CD8-positive, alpha-beta T cell (primary cell): ENCODE measurements at regions of chr9 and their contacts with region 1.

Region 1: GRCh38 chr9:85610074-85610860 is 131.5 kb downstream of the AGTPBP1 start:
- DNase-seq: peak in 5 of 9 experiments; percentile 21 to 86 (median 44)
- ATAC-seq: peak; percentile 94
- H3K4me3 ChIP-seq: no peak overlapping the region
- H3K4me3 Mint-ChIP-seq: peak overlapping the region; percentile 23
- H3K27ac ChIP-seq: peak overlapping the region in 1 of 2 experiments; percentile 36
- H3K27ac Mint-ChIP-seq: peak overlapping the region; percentile 66
- H3K4me1 ChIP-seq: no peaks in the 10 kb centered on the region
- H3K4me1 Mint-ChIP-seq: peaks cover 9% of the 10 kb centered on the region
- H3K27me3 ChIP-seq: no peaks in the 10 kb centered on the region
- H3K27me3 Mint-ChIP-seq: no peaks in the 10 kb centered on the region
- CTCF ChIP-seq: peak; percentile 74

Region 2: DNA sequence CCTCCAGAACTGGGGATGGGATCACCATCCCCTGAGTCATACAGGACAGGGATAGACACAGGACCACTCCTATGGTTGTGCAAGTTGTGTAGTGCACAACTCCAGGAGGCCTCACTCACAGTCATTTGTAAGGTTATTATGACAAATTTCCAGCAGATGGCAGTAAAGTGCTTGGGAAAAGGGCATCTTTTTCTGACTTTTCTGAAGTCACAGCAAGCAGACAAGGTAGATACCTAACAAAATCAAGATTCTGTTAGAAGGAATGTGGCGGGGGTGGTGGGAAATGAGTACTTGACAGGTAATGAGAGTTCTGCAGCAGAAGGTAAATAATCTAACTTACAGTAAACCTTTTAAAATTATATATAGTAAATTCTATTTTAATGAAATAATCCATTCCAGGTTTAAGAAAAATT is 1672.3 kb before region 1 on chr9:
- CTCF ChIA-PET with region 1: no interaction called
- POLR2A ChIA-PET with region 1: no interaction called
- intact Hi-C with region 1: loop called in 1 of 2 experiments (anchors 5 kb)
- DNase-seq: peak in 6 of 9 experiments; percentile 4 to 78 (median 40)
- ATAC-seq: peak; percentile 77
- H3K4me3 ChIP-seq: no peak overlapping the region
- H3K4me3 Mint-ChIP-seq: no peak overlapping the region
- H3K27ac ChIP-seq: no peak overlapping the region
- H3K27ac Mint-ChIP-seq: no peak overlapping the region
- H3K4me1 ChIP-seq: no peaks in the 10 kb centered on the region
- H3K4me1 Mint-ChIP-seq: peaks cover 2% of the 10 kb centered on the region
- H3K27me3 ChIP-seq: no peaks in the 10 kb centered on the region
- H3K27me3 Mint-ChIP-seq: no peaks in the 10 kb centered on the region
- CTCF ChIP-seq: peak; percentile 80

Region 3: DNA sequence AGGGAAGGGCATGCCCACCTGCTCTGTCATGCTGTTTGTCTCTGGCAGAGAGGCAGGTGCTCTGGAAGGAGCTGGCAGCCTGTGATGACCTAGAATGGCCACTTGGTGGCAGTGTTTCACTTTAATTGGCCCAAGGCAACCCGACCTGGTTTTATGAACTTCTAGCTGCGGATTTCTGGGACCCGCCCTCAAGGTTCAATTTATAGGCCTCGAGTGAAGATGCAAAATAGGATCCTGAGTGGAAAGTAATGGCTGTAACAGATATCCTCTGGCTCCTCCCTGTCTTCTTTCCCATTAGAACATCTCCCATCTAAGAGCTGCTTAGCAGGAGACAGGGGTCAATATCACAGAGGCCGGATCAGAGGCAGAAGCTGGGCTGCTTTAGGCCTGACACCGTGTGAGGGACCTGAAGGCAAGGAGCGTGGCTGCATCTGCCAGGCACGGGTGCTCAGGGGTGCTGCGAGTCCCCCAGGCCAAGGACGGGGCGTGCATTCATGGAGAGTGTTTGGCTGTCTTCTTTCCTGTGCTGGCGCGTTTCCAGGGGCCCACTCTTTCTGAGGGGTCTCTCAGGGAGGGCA is 1213.0 kb before region 1 on chr9:
- CTCF ChIA-PET with region 1: interaction called, 24 read pairs
- POLR2A ChIA-PET with region 1: no interaction called
- intact Hi-C with region 1: loop called in 1 of 2 experiments (anchors 1 kb)
- DNase-seq: peak; percentile 28 to 72 (median 61)
- ATAC-seq: peak; percentile 56
- H3K4me3 ChIP-seq: no peak overlapping the region
- H3K4me3 Mint-ChIP-seq: no peak overlapping the region
- H3K27ac ChIP-seq: no peak overlapping the region
- H3K27ac Mint-ChIP-seq: no peak overlapping the region
- H3K4me1 ChIP-seq: no peaks in the 10 kb centered on the region
- H3K4me1 Mint-ChIP-seq: no peaks in the 10 kb centered on the region
- H3K27me3 ChIP-seq: no peaks in the 10 kb centered on the region
- H3K27me3 Mint-ChIP-seq: peaks cover 2% of the 10 kb centered on the region
- CTCF ChIP-seq: peak; percentile 79

Region 4: DNA sequence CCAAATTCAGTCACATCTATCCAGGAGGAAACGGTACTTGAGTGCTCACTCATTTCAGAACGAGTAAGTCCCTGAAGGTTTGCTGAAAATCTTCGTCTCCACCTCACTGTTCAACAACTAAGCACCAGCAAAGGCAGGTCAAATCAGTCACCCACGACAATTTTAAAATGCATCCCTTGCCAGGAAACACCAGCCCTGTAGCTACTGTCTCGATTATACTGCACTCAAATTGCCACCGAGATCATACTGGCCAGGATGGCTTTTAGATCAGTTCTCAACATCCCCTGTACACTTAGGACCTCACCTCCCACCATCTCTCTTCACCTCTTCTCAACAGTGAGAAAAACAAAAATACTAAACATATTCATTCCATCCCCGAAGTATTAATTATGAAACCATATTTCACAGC is 167.1 kb before region 1 on chr9:
- CTCF ChIA-PET with region 1: no interaction called
- POLR2A ChIA-PET with region 1: no interaction called
- intact Hi-C with region 1: no loop called
- DNase-seq: no peak
- ATAC-seq: no peak
- H3K4me3 ChIP-seq: no peak overlapping the region
- H3K4me3 Mint-ChIP-seq: no peak overlapping the region
- H3K27ac ChIP-seq: no peak overlapping the region
- H3K27ac Mint-ChIP-seq: no peak overlapping the region
- H3K4me1 ChIP-seq: no peaks in the 10 kb centered on the region
- H3K4me1 Mint-ChIP-seq: no peaks in the 10 kb centered on the region
- H3K27me3 ChIP-seq: no peaks in the 10 kb centered on the region
- H3K27me3 Mint-ChIP-seq: no peaks in the 10 kb centered on the region
- CTCF ChIP-seq: no peak

Region 5: GRCh38 chr9:85594316-85594715 is 16.0 kb before region 1 on chr9:
- CTCF ChIA-PET with region 1: interaction called, 5 read pairs
- POLR2A ChIA-PET with region 1: no interaction called
- intact Hi-C with region 1: loop called in 1 of 2 experiments (anchors 2 kb)
- DNase-seq: no peak
- ATAC-seq: no peak
- H3K4me3 ChIP-seq: no peak overlapping the region
- H3K4me3 Mint-ChIP-seq: no peak overlapping the region
- H3K27ac ChIP-seq: no peak overlapping the region
- H3K27ac Mint-ChIP-seq: no peak overlapping the region
- H3K4me1 ChIP-seq: no peaks in the 10 kb centered on the region
- H3K4me1 Mint-ChIP-seq: no peaks in the 10 kb centered on the region
- H3K27me3 ChIP-seq: no peaks in the 10 kb centered on the region
- H3K27me3 Mint-ChIP-seq: no peaks in the 10 kb centered on the region
- CTCF ChIP-seq: no peak